ENCODE measurements at regions of chr4 and their contacts with region 1.

Region 1: GRCh38 chr4:124262211-124263179 is 450.0 kb downstream of the ANKRD50 start:
- DNase-seq: no peak
- H3K4me3 ChIP-seq: no peak overlapping the region
- H3K27ac ChIP-seq: no peak overlapping the region
- H3K4me1 ChIP-seq: no peaks in the 10 kb centered on the region
- H3K27me3 ChIP-seq: no peaks in the 10 kb centered on the region
- CTCF ChIP-seq: peak; percentile 91

Region 2: DNA sequence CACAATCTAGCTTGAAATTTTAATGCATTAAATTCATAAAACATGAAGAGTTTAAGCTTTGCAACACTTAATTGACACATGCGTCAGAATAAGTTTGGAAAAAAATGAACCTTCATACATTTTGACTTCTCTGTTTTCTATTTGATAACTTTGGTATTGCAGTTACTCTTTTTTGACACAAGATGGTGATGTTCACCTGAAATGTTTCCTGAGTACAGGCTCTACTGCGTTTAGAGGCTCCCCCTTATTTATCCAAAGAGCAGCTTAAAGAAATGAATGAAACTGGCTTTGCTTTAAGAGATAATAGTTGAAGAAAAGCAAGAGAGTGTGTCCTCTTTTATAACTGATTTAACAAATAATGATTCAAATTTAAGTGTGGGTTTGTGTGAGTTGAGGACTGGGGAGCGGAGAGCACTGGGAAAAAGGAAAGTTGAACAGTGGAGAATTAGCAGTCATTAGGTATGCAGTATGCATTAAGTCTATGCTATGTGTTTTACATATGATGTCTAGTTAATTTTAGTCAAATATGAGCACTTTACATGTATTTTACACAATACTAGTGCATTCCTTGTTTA is 1159.5 kb before region 1 on chr4:
- intact Hi-C with region 1: loop called (anchors 10 kb)
- DNase-seq: no peak
- H3K4me3 ChIP-seq: no peak overlapping the region
- H3K27ac ChIP-seq: no peak overlapping the region
- H3K4me1 ChIP-seq: peaks cover 17% of the 10 kb centered on the region
- H3K27me3 ChIP-seq: no peaks in the 10 kb centered on the region
- CTCF ChIP-seq: peak; percentile 87

Region 3: DNA sequence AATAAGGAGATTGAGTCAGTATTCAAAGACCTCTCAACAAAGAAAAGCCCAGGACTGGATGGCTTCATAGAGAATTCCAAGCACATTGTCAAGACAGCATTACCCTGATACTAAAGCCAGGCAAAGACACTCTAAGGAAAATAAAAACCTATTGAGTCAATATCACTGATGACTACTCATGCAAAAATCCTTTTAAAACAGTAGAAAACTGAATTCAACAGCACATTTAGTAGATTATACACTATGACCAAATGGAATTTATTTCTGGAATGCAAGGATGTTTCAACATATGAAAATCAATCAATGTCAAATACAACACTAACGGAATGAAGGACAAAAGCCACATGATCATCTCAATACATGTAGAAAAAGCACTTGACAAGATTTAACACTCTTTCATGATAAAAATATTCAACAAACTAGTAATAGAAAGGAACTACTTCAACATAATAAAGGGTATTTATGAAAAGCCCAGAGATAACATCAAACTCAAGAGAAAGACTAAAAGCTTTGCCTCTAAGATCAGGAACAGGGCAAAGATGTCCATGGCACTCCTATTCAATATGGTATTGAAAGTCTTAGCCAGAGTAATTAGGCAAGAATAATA is 183.2 kb before region 1 on chr4:
- intact Hi-C with region 1: no loop called
- DNase-seq: no peak
- H3K4me3 ChIP-seq: no peak overlapping the region
- H3K27ac ChIP-seq: no peak overlapping the region
- H3K4me1 ChIP-seq: no peaks in the 10 kb centered on the region
- H3K27me3 ChIP-seq: no peaks in the 10 kb centered on the region
- CTCF ChIP-seq: no peak

Measured in left ventricle myocardium inferior (tissue), 1 donor.